Vagina (tissue), 2 donors: ENCODE measurements at regions of chr5 and their contacts with region 1.

Region 1: GRCh38 chr5:96065577-96066385 is 104.1 kb upstream of the ELL2 start:
- DNase-seq: no peak
- H3K4me3 ChIP-seq: no peak overlapping the region
- H3K27ac ChIP-seq: no peak overlapping the region
- H3K4me1 ChIP-seq: no peaks in the 10 kb centered on the region
- H3K27me3 ChIP-seq: no peaks in the 10 kb centered on the region
- CTCF ChIP-seq: no peak
- POLR2A ChIP-seq: no peak

Region 2: GRCh38 chr5:96081276-96081858 is 15.6 kb after region 1 on chr5:
- intact Hi-C with region 1: loop called (anchors 1 kb)
- DNase-seq: no peak
- H3K4me3 ChIP-seq: no peak overlapping the region
- H3K27ac ChIP-seq: no peak overlapping the region
- H3K4me1 ChIP-seq: no peaks in the 10 kb centered on the region
- H3K27me3 ChIP-seq: no peaks in the 10 kb centered on the region
- CTCF ChIP-seq: no peak
- POLR2A ChIP-seq: no peak